Activated T-helper 2 cell treated with anti-CD3 and anti-CD28 coated beads, Interferon-gamma antibody, Interleukin-2, Interleukin-4, amounts not matched to agents 10 μg/mL and 5 μg/mL and 100 μg/mL, durations not matched to agents 14 hours and 24 hours and 36 hours (primary cell): ENCODE measurements at regions of chr6 and their contacts with region 1.

Region 1: GRCh38 chr6:4941782-4942672 is 61.8 kb downstream of the RPP40 start:
- DNase-seq: peak; percentile 48
- H3K4me3 Mint-ChIP-seq: no peak overlapping the region
- H3K27ac Mint-ChIP-seq: peak overlapping the region; percentile 76
- H3K4me1 Mint-ChIP-seq: peaks cover 45% of the 10 kb centered on the region
- H3K27me3 Mint-ChIP-seq: no peaks in the 10 kb centered on the region

Region 2: DNA sequence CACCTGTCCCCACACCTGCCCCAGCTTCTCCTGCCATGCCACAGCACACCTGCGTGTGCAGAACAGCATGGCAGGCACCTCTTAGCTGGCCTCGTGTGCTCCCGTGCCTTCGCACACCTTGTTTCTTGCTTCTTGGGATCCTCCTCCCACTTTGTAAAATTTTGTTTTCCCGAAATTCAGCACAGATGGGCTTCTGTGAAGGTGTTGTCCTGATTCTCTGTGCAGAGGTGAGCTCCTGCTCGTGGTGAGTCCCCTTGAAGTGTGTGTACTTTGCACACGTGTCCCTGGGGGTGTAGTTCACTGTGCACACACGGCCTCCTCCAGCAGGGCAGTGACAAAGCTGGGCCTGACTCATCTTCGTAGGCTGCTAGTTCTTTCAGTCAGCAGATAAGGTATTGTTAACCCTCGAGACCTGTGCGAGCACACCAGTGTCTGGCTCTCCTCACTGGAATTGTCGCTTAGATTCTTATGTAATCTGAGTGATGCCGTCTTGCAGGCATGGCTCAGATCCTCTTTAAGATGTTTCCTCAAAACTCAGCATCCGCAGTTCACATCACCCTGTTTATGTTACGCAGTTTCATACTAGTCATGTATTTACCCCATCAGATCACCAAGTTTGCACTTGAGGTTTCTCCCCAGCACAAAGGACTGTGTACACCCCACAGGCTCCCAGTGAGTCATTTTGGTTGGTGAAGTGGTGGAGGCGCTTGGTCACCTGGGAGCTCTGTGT is 88.1 kb before region 1 on chr6:
- intact Hi-C with region 1: loop called (anchors 1 kb)
- DNase-seq: no peak
- H3K4me3 Mint-ChIP-seq: no peak overlapping the region
- H3K27ac Mint-ChIP-seq: no peak overlapping the region
- H3K4me1 Mint-ChIP-seq: peaks cover 26% of the 10 kb centered on the region
- H3K27me3 Mint-ChIP-seq: no peaks in the 10 kb centered on the region

Region 3: DNA sequence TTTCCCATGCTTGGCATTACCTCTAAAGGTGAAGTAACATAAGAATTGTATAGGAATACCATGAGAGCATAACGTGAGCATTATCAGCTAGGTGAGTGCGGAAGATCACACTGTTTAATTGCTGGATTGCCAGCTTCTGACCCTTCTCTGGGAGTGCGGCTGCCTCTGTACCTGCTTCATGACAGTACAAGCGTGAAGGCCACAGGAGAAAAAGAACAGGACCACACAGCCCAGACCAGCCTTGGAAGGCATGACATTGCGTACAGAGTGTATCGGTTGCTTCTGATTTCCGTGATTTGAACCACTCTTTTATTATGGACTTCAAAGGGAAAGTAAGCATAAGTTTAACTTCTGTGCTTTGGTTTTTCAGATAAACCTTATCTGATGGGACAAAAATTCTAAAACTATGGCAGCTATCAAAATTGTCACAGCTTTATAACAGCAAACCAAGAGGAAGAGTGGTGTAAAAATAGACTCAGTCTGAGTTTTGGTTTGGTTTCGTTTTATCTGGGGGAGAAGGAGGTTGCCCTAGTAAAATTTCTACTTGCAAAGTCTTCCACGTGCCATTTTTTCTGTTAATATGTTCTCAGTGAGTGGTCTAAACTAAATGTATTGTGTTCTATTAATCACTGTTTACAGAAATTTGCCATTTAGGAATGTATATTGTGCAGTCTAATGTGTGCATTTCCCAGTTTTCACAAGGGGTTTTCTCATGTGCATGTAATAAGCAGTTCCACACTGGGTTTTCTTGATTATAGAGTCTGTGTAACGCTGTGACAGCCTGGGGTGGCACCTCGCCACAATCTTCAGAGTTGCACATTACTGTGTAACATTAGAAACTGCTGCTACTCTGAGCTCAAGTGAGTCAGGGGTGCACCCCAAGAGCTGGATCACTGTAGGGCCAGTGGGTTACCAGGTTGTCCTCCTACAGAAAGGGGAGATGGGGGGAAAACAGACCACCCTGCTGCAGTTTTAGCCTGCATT is 35.4 kb before region 1 on chr6:
- intact Hi-C with region 1: loop called (anchors 2 kb)
- DNase-seq: no peak
- H3K4me3 Mint-ChIP-seq: peak overlapping the region; percentile 60
- H3K27ac Mint-ChIP-seq: peak overlapping the region; percentile 50
- H3K4me1 Mint-ChIP-seq: peaks cover 31% of the 10 kb centered on the region
- H3K27me3 Mint-ChIP-seq: no peaks in the 10 kb centered on the region

Region 4: GRCh38 chr6:5003604-5004372 is 61.8 kb after region 1 on chr6 and contains the start of gene RPP40:
- intact Hi-C with region 1: loop called (anchors 5 kb)
- DNase-seq: peak; percentile 97
- H3K4me3 Mint-ChIP-seq: peak within 1 kb of the TSS; percentile 91
- H3K27ac Mint-ChIP-seq: peak within 1 kb of the TSS; percentile 96
- H3K4me1 Mint-ChIP-seq: peaks cover 7% of the 10 kb centered on the region
- H3K27me3 Mint-ChIP-seq: no peaks in the 10 kb centered on the region
- total RNA-seq, gene RPP40: 11.7 and 12.2 TPM in 2 replicates